PC-3 (cell line): ENCODE measurements at regions of chr1 and their contacts with region 1.

Region 1: DNA sequence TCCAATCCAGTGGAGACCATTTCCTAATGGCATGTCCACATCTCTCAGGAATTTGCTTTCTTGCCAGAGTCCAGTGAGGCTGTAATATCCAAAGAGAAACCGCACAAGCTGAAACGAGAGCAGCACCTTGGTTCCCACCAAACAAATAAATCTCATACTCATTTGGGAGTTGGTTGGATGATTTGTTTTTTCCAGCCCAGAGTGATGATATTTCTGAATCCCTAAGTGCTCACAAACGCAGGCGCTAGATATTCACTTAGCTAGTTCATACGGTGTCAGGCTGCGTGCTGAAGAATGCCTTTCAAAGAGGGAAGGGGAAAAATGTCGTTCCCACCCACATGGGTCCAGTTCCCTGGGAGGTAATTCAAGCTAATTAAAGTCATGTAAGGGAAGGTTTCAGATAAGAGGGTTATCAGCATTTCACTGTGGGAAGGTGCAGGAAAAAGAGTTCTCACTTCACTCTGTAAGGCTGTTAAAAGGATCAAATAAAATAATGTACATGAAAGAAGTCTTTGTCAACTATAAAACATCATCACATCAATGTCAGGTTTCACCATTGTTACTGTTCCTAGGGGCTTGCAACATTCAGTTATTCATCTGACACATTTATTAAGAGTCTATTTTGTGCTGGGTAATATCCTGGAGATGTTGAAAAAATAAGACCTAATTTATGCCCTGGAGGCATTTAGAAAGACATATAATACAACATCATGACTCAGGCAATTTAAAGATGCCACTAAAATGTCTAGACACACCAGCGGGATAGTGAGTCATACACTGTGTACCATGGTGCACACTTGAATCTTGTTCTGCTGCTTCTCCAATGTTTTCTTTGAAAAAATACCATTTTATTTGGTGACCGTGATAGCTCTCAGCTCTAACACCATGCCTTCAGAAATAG is 19.4 kb downstream of the DPT start:
- DNase-seq: peak; percentile 99
- ATAC-seq: peak; percentile 83
- H3K4me3 ChIP-seq: peak overlapping the region; percentile 43
- H3K27ac ChIP-seq: peak overlapping the region; percentile 98
- H3K4me1 ChIP-seq: peaks cover 27% of the 10 kb centered on the region
- H3K27me3 ChIP-seq: no peaks in the 10 kb centered on the region
- CTCF ChIP-seq: no peak

Region 2: GRCh38 chr1:168628807-168629206 is 80.8 kb before region 1 on chr1:
- CTCF ChIA-PET with region 1: no interaction called
- POLR2A ChIA-PET with region 1: no interaction called
- intact Hi-C with region 1: loop called (anchors 1 kb)
- DNase-seq: peak; percentile 98
- ATAC-seq: peak; percentile 97
- H3K4me3 ChIP-seq: peak overlapping the region; percentile 6; the same call in 1 of the 2 replicates
- H3K27ac ChIP-seq: peak overlapping the region; percentile 84
- H3K4me1 ChIP-seq: peaks cover 34% of the 10 kb centered on the region
- H3K27me3 ChIP-seq: no peaks in the 10 kb centered on the region
- CTCF ChIP-seq: no peak

Region 3: DNA sequence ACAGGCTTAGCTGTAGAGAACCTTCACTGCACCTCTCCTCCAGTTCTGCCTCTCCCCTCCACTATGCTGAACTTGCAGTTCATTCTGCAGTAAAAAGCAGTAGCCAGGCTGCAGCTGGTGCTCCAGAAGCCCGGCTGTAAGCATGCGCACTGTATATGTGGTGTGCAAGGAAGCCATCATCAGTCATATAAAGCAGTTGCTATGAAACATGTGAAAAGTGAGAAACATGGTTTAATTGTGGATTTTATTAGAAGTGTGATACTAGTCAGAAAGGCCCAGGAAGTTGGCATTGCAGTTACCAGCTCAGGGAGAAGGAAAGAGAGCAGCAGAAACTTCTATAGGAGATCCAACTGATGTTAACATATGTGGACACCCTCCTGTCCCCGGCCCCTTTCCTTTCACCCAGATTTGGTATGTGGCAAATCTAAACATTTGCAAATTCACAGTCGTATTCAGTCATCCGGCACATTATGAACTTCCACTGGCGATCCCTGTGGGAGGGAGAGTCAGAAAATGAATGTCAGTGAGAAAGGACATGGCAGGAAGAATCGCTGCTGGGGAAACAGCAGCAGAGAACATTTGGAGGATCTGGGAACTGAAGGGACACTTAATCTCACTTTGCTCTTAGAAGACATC is 13.4 kb before region 1 on chr1:
- CTCF ChIA-PET with region 1: no interaction called
- POLR2A ChIA-PET with region 1: no interaction called
- intact Hi-C with region 1: no loop called
- DNase-seq: no peak
- ATAC-seq: no peak
- H3K4me3 ChIP-seq: no peak overlapping the region
- H3K27ac ChIP-seq: no peak overlapping the region
- H3K4me1 ChIP-seq: no peaks in the 10 kb centered on the region
- H3K27me3 ChIP-seq: no peaks in the 10 kb centered on the region
- CTCF ChIP-seq: no peak

Region 4: DNA sequence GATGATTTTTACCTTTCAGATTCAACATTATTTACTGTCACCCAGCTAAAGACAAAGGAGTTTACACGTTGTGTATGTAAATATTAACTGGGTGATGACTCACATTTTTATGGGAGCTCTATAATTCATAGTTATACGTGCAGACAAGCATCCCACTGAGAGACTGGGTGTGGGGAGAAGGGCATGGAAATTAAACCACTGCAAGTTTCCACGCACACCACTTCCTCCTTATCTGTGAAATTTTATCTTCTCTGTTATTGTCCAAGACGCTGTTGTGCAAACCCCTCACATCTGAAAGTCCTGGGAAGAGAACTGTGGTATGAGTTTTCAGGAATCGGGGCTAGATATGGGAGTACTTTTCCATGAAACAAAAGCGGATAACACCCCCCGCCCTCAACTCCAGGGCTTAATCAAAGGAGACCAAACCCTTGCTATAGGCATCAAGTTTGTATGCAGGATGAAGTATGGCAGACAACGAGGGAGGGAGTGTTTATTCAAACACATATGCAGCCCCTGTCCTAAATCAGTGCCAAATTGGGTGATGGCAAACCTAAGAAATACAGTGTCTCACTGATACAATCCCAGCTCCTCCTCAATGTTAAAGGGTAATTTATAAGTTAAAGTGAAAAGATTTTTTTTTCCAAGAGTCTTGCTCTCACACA is 42.6 kb after region 1 on chr1:
- CTCF ChIA-PET with region 1: no interaction called
- POLR2A ChIA-PET with region 1: interaction called, 3 read pairs
- intact Hi-C with region 1: loop called (anchors 1 kb)
- DNase-seq: peak; percentile 91
- ATAC-seq: peak; percentile 92
- H3K4me3 ChIP-seq: peak overlapping the region; percentile 47
- H3K27ac ChIP-seq: peak overlapping the region; percentile 77
- H3K4me1 ChIP-seq: peaks cover 24% of the 10 kb centered on the region
- H3K27me3 ChIP-seq: no peaks in the 10 kb centered on the region
- CTCF ChIP-seq: no peak

Region 5: DNA sequence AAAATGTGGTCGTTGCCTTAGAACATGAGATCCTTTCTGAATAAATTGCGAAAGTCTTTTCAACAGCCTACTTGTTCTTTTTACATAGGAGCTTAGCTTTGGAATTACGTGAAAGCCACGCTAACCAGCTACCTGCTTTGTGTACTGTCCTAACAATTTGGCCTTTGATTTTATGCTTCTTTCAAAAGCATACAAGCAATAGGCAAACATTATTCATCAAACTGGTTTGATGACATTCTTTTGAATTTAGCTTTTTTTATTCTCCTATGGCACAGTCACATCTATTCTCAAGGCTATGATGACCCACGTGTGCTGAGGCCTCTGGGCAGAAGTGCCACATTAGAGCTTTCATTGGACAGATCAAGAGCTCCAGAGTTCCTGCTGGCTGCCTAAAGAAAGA is 197.4 kb after region 1 on chr1:
- CTCF ChIA-PET with region 1: no interaction called
- POLR2A ChIA-PET with region 1: no interaction called
- intact Hi-C with region 1: loop called (anchors 5 kb)
- DNase-seq: peak; percentile 99
- ATAC-seq: peak; percentile 86
- H3K4me3 ChIP-seq: peak overlapping the region; percentile 36; the same call in 1 of the 2 replicates
- H3K27ac ChIP-seq: peak overlapping the region; percentile 95
- H3K4me1 ChIP-seq: peaks cover 48% of the 10 kb centered on the region
- H3K27me3 ChIP-seq: no peaks in the 10 kb centered on the region
- CTCF ChIP-seq: no peak

Region 6: GRCh38 chr1:169060906-169061639 is 351.4 kb after region 1 on chr1:
- CTCF ChIA-PET with region 1: no interaction called
- POLR2A ChIA-PET with region 1: no interaction called
- intact Hi-C with region 1: loop called (anchors 1 kb)
- DNase-seq: peak; percentile 66
- ATAC-seq: peak; percentile 10
- H3K4me3 ChIP-seq: peak overlapping the region; percentile 8; the same call in 1 of the 2 replicates
- H3K27ac ChIP-seq: peak overlapping the region; percentile 93
- H3K4me1 ChIP-seq: peaks cover 34% of the 10 kb centered on the region
- H3K27me3 ChIP-seq: no peaks in the 10 kb centered on the region
- CTCF ChIP-seq: no peak

Region 7: GRCh38 chr1:169240449-169241237 is 531.0 kb after region 1 on chr1:
- CTCF ChIA-PET with region 1: no interaction called
- POLR2A ChIA-PET with region 1: no interaction called
- intact Hi-C with region 1: loop called (anchors 5 kb)
- DNase-seq: peak; percentile 72
- ATAC-seq: peak; percentile 88
- H3K4me3 ChIP-seq: peak overlapping the region; percentile 31
- H3K27ac ChIP-seq: peak overlapping the region; percentile 73
- H3K4me1 ChIP-seq: peaks cover 19% of the 10 kb centered on the region
- H3K27me3 ChIP-seq: no peaks in the 10 kb centered on the region
- CTCF ChIP-seq: no peak